ENCODE measurements at regions of chr3 and their contacts with region 1.

Region 1: GRCh38 chr3:146065573-146066006 is 95.4 kb downstream of the PLOD2 start:
- DNase-seq: peak; percentile 62
- H3K4me3 Mint-ChIP-seq: no peak overlapping the region
- H3K27ac Mint-ChIP-seq: no peak overlapping the region
- H3K4me1 Mint-ChIP-seq: peaks cover 8% of the 10 kb centered on the region
- H3K27me3 Mint-ChIP-seq: no peaks in the 10 kb centered on the region
- CTCF ChIP-seq: peak; percentile 74

Region 2: DNA sequence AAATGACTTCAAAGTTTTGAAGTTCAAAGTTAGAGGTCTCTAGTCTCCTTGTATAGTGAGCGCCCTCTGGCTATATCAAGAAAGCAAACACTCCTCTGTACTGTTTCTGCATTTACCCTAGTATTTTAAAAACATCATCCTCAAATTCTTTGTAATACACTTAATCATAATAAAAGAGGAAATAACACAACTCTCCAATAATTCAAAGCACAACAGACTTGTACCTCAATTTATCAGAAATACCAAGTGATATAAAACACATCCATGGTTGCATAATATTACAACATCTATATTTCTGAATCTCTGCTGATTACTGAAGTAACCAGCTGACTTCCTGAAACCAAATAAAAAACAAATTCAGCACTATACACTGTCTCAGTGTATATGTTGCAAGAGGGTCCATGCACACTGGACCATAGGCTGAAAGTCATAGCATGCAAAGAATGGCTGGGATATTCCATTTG is 82.9 kb after region 1 on chr3:
- CTCF ChIA-PET with region 1: interaction called, 5 read pairs
- intact Hi-C with region 1: loop called (anchors 1 kb)
- DNase-seq: no peak
- H3K4me3 Mint-ChIP-seq: no peak overlapping the region
- H3K27ac Mint-ChIP-seq: peak overlapping the region; percentile 39
- H3K4me1 Mint-ChIP-seq: peaks cover 48% of the 10 kb centered on the region
- H3K27me3 Mint-ChIP-seq: no peaks in the 10 kb centered on the region
- CTCF ChIP-seq: no peak

Region 3: GRCh38 chr3:146156095-146156494 is 90.5 kb after region 1 on chr3:
- CTCF ChIA-PET with region 1: interaction called, 28 read pairs
- intact Hi-C with region 1: no loop called
- DNase-seq: peak; percentile 36
- H3K4me3 Mint-ChIP-seq: peak overlapping the region; percentile 66
- H3K27ac Mint-ChIP-seq: peak overlapping the region; percentile 97
- H3K4me1 Mint-ChIP-seq: peaks cover 33% of the 10 kb centered on the region
- H3K27me3 Mint-ChIP-seq: no peaks in the 10 kb centered on the region
- CTCF ChIP-seq: no peak

Region 4: DNA sequence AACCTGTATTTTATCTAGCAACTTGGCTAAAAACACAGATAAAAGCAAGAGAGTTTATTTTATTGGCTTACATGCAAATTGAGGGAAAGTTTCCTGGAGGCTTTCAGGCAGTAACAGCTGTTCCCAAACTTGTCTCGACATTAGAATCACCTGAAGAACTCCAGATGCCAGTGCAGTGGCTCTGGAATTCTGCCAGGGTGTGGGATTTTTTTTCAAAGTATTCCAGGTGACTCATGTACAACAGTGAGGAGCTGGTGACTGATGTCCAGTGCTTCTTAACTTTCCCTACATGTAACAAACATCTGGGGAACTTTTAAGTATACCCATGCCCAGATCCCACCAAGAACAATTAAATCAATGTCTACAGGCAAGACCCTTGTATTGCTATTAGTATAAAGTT is 119.0 kb after region 1 on chr3:
- CTCF ChIA-PET with region 1: interaction called, 108 read pairs
- intact Hi-C with region 1: loop called (anchors 1 kb)
- DNase-seq: peak; percentile 81
- H3K4me3 Mint-ChIP-seq: no peak overlapping the region
- H3K27ac Mint-ChIP-seq: no peak overlapping the region
- H3K4me1 Mint-ChIP-seq: peaks cover 17% of the 10 kb centered on the region
- H3K27me3 Mint-ChIP-seq: no peaks in the 10 kb centered on the region
- CTCF ChIP-seq: no peak

Region 5: GRCh38 chr3:146189519-146190173 is 124.1 kb after region 1 on chr3:
- CTCF ChIA-PET with region 1: interaction called, 108 read pairs
- intact Hi-C with region 1: loop called (anchors 1 kb)
- DNase-seq: peak; percentile 57
- H3K4me3 Mint-ChIP-seq: peak overlapping the region; percentile 26
- H3K27ac Mint-ChIP-seq: peak overlapping the region; percentile 66
- H3K4me1 Mint-ChIP-seq: peaks cover 14% of the 10 kb centered on the region
- H3K27me3 Mint-ChIP-seq: no peaks in the 10 kb centered on the region
- CTCF ChIP-seq: peak; percentile 81

Region 6: DNA sequence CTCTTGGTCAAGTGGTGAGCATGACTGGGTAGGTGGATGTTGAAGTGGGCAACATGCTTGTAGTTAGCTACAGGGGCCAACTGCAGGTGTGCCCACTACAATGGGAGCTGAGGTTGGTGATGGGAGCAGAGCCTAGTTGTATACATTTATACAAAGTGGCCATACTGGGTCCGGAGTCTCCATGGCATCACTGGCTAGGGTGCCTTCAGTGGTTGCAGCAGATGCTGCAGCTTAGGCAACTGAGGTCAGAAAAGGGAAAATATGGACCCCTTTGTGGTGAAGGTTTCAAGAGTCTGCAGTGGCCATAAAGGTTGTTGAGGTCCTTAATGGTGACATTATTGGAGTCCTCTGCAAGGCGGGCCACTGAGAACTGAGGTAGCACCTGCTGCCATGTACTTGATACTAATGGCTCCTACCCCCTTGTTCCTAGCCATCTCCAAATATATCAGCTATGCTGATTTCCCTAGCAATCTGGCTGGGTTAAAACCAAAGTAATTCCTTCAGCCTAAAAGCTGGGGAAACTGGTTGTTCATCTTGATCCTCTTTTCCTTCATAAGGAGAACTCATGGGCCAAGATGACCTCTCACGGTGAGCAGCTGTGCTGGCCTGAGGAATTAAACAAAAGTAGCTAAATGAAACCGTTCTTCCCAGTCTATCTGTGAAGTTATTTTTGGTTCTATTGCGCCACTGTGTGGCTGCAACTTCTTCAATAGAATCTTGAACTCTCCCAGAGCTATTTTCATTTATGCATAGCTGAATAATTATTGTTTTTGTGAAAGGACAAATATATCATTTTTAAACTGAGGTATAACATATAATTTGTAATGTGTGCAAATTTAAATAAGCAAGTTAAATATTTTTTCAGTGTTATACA is 261.3 kb after region 1 on chr3:
- CTCF ChIA-PET with region 1: interaction called, 13 read pairs
- intact Hi-C with region 1: loop called (anchors 5 kb)
- DNase-seq: peak; percentile 55
- H3K4me3 Mint-ChIP-seq: no peak overlapping the region
- H3K27ac Mint-ChIP-seq: no peak overlapping the region
- H3K4me1 Mint-ChIP-seq: no peaks in the 10 kb centered on the region
- H3K27me3 Mint-ChIP-seq: no peaks in the 10 kb centered on the region
- CTCF ChIP-seq: peak; percentile 60